ENCODE measurements at regions of chr9 and their contacts with region 1.

Region 1: GRCh38 chr9:2638871-2639673 is 17.5 kb downstream of the VLDLR start:
- DNase-seq: no peak
- H3K4me3 Mint-ChIP-seq: no peak overlapping the region
- H3K27ac Mint-ChIP-seq: peak overlapping the region; percentile 26
- H3K4me1 Mint-ChIP-seq: peaks cover 13% of the 10 kb centered on the region
- H3K27me3 Mint-ChIP-seq: peaks cover 1% of the 10 kb centered on the region

Region 2: GRCh38 chr9:2336055-2336454 is 303.0 kb before region 1 on chr9:
- CTCF ChIA-PET with region 1: no interaction called
- POLR2A ChIA-PET with region 1: no interaction called
- intact Hi-C with region 1: no loop called
- DNase-seq: no peak
- H3K4me3 Mint-ChIP-seq: no peak overlapping the region
- H3K27ac Mint-ChIP-seq: no peak overlapping the region
- H3K4me1 Mint-ChIP-seq: no peaks in the 10 kb centered on the region
- H3K27me3 Mint-ChIP-seq: no peaks in the 10 kb centered on the region

Region 3: GRCh38 chr9:2610985-2611384 is 28.1 kb before region 1 on chr9:
- CTCF ChIA-PET with region 1: no interaction called
- POLR2A ChIA-PET with region 1: no interaction called
- intact Hi-C with region 1: no loop called
- DNase-seq: no peak
- H3K4me3 Mint-ChIP-seq: no peak overlapping the region
- H3K27ac Mint-ChIP-seq: no peak overlapping the region
- H3K4me1 Mint-ChIP-seq: no peaks in the 10 kb centered on the region
- H3K27me3 Mint-ChIP-seq: peaks cover 18% of the 10 kb centered on the region

Region 4: DNA sequence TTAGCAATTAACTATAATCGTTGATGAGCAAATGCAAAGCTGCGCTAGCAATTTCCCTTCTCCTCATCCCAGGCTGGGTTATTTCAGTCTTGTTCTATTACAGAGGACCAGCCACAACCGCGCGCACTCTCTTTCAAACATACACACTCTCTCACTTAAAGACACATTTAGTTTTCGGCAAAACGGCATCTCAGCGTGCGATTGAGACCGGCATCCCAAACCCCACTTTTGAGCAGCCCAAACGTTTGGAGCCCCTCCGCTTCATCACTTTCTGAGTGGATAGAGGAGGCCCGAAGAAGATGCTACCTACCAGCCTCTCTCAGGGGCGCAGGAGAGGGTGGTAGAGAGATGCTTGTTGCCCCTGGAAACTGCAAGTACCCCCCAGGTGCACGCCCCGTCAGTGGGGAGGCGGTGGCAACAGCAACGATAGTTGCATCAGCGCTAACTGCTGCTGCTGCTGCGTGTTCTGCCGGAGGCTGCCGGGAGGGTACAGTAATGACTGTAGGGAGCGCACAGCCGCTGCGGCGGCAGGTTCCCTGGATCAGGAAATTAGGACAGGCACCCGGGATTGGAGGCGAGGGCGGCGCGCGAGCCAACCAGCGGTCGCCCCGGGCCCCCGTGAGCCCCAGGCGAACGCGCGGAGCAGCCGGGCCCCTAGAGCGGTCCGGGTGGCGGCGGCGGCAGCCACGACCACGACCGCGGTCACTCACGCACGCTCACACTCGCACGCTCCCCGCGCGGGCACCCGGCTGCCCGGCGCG is 18.0 kb before region 1 on chr9:
- CTCF ChIA-PET with region 1: no interaction called
- POLR2A ChIA-PET with region 1: interaction called, 4 read pairs
- intact Hi-C with region 1: loop called (anchors 1 kb)
- DNase-seq: peak; percentile 86
- H3K4me3 Mint-ChIP-seq: peak overlapping the region; percentile 75
- H3K27ac Mint-ChIP-seq: peak overlapping the region; percentile 28
- H3K4me1 Mint-ChIP-seq: peaks cover 14% of the 10 kb centered on the region
- H3K27me3 Mint-ChIP-seq: peaks cover 49% of the 10 kb centered on the region

Region 5: GRCh38 chr9:2697492-2697891 is 58.4 kb after region 1 on chr9:
- CTCF ChIA-PET with region 1: no interaction called
- POLR2A ChIA-PET with region 1: no interaction called
- intact Hi-C with region 1: no loop called
- DNase-seq: no peak
- H3K4me3 Mint-ChIP-seq: no peak overlapping the region
- H3K27ac Mint-ChIP-seq: no peak overlapping the region
- H3K4me1 Mint-ChIP-seq: no peaks in the 10 kb centered on the region
- H3K27me3 Mint-ChIP-seq: no peaks in the 10 kb centered on the region

Region 6: GRCh38 chr9:2800393-2801179 is 161.5 kb after region 1 on chr9:
- CTCF ChIA-PET with region 1: no interaction called
- POLR2A ChIA-PET with region 1: no interaction called
- intact Hi-C with region 1: loop called (anchors 5 kb)
- DNase-seq: no peak
- H3K4me3 Mint-ChIP-seq: no peak overlapping the region
- H3K27ac Mint-ChIP-seq: no peak overlapping the region
- H3K4me1 Mint-ChIP-seq: peaks cover 17% of the 10 kb centered on the region
- H3K27me3 Mint-ChIP-seq: no peaks in the 10 kb centered on the region

Region 7: DNA sequence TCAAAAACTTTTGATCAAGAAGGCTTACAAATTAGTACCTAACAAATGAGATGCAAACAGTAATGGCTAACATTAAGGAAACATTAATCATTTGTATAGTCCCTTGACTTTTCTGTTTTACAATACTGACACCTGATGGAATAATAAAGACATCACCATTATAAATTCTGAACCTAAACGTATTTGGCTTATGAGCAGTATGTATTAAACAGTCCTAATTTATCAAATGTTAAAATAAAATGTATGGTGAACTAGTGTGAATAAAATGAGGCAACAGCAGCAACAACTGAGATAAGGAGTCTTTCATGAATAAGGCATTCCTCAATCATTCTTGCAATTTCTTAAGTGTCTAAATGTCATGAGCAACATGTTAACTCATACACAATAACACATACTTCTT is 198.8 kb after region 1 on chr9:
- CTCF ChIA-PET with region 1: no interaction called
- POLR2A ChIA-PET with region 1: no interaction called
- intact Hi-C with region 1: loop called (anchors 5 kb)
- DNase-seq: no peak
- H3K4me3 Mint-ChIP-seq: no peak overlapping the region
- H3K27ac Mint-ChIP-seq: no peak overlapping the region
- H3K4me1 Mint-ChIP-seq: peaks cover 34% of the 10 kb centered on the region
- H3K27me3 Mint-ChIP-seq: no peaks in the 10 kb centered on the region

Measured in activated CD4-positive, alpha-beta memory T cell treated with anti-CD3 and anti-CD28 coated beads for 36 hours (primary cell).